ENCODE measurements at regions of chr11 and their contacts with region 1.

Region 1: DNA sequence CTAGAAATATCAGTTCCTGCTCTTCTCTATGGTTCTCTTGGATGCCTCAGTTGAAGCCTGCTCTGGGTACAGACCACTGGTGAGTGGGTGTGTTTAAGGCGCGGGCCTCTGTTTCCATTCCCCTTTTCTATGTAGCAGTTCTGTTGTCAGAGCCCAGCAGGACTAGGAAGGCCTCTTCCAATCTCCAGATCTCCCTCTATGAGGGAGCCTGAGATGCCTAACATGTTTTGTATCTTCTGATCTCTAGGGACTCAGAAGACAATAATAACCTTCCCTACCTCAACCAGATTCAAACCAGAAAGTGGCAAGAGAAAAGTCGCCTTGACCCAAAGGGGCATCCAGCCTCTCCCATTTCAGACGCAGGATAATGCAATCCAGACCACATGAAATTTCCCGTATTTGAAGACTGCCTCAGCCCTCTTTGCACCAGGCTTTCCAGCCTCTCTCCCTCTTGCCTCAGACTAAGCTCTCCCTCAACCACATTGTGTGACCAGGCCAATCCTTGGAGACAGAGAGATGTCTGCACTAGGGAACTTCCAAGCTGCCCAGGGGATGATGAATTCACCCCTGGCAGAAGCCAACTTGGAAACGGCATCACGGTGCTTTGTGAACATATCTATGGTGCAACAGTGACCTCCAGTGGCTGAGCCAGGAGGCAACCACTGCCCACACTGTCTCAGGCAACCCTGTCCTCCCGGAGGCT is 150.1 kb upstream of the UBASH3B start:
- DNase-seq: peak; percentile 71 to 91 (median 86)
- H3K4me3 ChIP-seq: peak overlapping the region in 2 of 59 donors; percentile 0 to 7
- H3K27ac ChIP-seq: peak overlapping the region in 26 of 59 donors; percentile 6 to 75 (median 52)
- H3K27me3 ChIP-seq: no peaks in the 10 kb centered on the region
- CTCF ChIP-seq: peak; percentile 69 to 98 (median 92)

Region 2: DNA sequence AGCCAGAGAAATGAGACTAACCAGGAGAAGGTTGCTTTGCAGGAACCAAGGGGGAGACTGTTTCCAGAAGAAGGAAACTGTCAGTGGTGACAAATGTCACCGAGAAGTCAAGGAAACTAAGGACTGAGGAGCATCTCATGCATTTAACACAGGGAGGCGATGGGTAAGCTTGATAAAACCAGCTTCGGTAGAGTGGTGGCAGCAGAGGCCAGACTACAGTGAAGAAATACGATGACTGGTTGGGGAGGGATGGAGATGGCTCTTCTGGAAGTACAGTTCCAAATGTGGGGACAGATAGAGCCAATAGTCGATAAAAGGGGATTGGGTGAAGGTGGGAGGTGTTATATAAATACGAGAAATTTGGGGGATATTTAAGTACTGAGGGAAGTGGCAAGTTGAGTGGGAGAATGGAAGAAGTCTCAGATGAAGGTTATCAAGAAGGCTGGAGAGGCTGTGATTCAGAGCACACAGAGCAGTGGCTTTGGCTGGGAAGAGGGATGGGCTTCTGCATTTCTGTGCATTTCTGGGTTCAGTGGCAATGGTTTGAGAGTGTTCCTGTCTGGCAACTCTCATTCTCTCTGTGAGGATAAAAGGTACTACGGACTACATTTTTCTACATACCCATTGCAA is 1183.7 kb before region 1 on chr11:
- intact Hi-C with region 1: loop called in 1 of 2 experiments (anchors 10 kb)
- DNase-seq: peak; percentile 36 to 86 (median 70)
- H3K4me3 ChIP-seq: no peak overlapping the region
- H3K27ac ChIP-seq: no peak overlapping the region
- H3K27me3 ChIP-seq: no peaks in the 10 kb centered on the region
- CTCF ChIP-seq: peak; percentile 30 to 94 (median 76)

Region 3: GRCh38 chr11:122020902-122021301 is 484.6 kb before region 1 on chr11:
- intact Hi-C with region 1: loop called (anchors 10 kb)
- DNase-seq: no peak
- H3K4me3 ChIP-seq: no peak overlapping the region
- H3K27ac ChIP-seq: no peak overlapping the region
- H3K27me3 ChIP-seq: no peaks in the 10 kb centered on the region
- CTCF ChIP-seq: peak in 55 of 56 donors; percentile 29 to 70 (median 54)

Region 4: GRCh38 chr11:122101625-122102291 is 403.7 kb before region 1 on chr11:
- intact Hi-C with region 1: loop called (anchors 5 kb)
- DNase-seq: peak; percentile 45 to 90 (median 81)
- H3K4me3 ChIP-seq: peak overlapping the region; percentile 58 to 91 (median 76)
- H3K27ac ChIP-seq: peak overlapping the region; percentile 91 to 99 (median 98)
- H3K27me3 ChIP-seq: no peaks in the 10 kb centered on the region
- CTCF ChIP-seq: peak; percentile 70 to 95 (median 85)

Region 5: DNA sequence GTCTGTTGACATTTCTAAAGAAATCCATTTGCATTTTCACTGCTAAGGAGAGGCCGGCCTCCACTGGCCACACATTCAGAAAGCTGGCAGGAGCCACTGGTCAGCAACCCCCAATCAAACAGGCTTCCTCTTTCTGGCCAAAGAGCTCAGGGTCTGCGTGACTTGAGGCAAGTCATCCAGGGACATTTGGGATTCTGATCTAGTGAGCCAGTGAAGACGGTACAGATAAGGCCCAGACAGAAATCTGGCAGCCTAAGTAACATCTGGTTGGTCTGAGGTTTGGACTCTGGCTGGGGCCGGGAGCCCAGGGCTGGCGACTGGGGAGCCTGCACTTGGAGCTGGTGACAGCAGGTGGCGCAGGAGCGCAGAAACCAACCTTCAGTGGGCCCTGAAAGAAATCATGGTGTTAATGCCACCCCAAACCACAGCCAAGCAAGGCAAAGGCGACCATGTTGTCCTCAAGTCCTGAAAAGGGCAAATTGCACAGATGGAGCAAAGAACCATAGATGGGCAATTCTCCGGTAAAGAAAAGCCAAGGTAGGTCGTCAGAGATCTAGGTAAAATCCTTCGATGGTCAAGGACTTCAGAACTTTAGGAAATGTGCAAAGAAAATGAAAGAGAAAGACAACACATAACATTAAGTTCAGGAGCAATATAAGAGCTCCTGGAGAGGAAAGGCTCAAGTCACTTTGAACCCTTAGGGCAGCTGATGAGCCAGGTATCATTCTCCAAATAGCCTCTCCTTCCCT is 290.0 kb before region 1 on chr11:
- intact Hi-C with region 1: loop called (anchors 2 to 5 kb)
- DNase-seq: peak; percentile 32 to 87 (median 76)
- H3K4me3 ChIP-seq: no peak overlapping the region
- H3K27ac ChIP-seq: peak overlapping the region; percentile 21 to 99 (median 96)
- H3K27me3 ChIP-seq: no peaks in the 10 kb centered on the region
- CTCF ChIP-seq: peak; percentile 44 to 97 (median 89)

Region 6: GRCh38 chr11:122293296-122294023 is 212.0 kb before region 1 on chr11:
- intact Hi-C with region 1: loop called (anchors 2 to 5 kb)
- DNase-seq: peak in 1 of 10 donors; percentile 40
- H3K4me3 ChIP-seq: no peak overlapping the region
- H3K27ac ChIP-seq: peak overlapping the region in 48 of 59 donors; percentile 3 to 81 (median 56)
- H3K27me3 ChIP-seq: no peaks in the 10 kb centered on the region
- CTCF ChIP-seq: peak in 53 of 56 donors; percentile 22 to 75 (median 55)

Region 7: DNA sequence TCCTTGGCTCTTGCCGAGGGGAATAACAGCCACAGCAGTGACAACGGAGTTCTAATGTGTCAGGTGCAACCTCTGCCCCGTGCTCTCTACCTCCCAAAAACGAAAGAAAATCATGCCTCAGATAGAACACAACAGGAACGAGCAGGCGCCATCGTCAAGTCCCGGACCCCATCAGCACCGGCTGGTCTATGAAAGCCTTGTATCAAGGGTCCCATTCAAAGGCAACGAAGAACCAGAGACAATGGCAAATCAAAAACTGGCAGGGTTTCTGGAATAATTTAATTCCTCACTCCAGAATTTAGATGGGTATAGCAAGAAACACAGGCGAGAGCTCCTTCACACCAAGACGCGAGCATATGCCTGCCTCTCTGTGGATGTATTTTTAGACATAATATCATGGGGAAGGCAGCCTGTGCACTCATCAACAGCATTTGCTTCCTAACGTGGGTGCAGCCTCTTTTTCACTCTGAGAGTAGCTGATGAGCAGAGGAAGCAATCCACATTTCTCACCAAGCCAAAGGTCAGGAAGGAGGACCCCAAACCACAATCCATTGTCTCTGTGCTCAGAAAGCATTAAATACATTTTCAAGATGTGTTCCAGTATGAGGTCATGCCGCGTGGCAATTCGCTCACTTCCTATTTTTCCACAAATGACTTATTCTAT is 196.1 kb before region 1 on chr11:
- intact Hi-C with region 1: no loop called
- DNase-seq: peak in 6 of 10 donors; percentile 20 to 75 (median 50)
- H3K4me3 ChIP-seq: peak overlapping the region; percentile 6 to 76 (median 59)
- H3K27ac ChIP-seq: peak overlapping the region; percentile 72 to 99 (median 94)
- H3K27me3 ChIP-seq: no peaks in the 10 kb centered on the region
- CTCF ChIP-seq: no peak

Region 8: GRCh38 chr11:122711831-122712381 is 206.5 kb after region 1 on chr11:
- intact Hi-C with region 1: no loop called
- DNase-seq: no peak
- H3K4me3 ChIP-seq: no peak overlapping the region
- H3K27ac ChIP-seq: peak overlapping the region in 26 of 59 donors; percentile 4 to 70 (median 46)
- H3K27me3 ChIP-seq: no peaks in the 10 kb centered on the region
- CTCF ChIP-seq: peak in 1 of 56 donors; percentile 16